ENCODE measurements at regions of chr17 and their contacts with region 1.

Region 1: DNA sequence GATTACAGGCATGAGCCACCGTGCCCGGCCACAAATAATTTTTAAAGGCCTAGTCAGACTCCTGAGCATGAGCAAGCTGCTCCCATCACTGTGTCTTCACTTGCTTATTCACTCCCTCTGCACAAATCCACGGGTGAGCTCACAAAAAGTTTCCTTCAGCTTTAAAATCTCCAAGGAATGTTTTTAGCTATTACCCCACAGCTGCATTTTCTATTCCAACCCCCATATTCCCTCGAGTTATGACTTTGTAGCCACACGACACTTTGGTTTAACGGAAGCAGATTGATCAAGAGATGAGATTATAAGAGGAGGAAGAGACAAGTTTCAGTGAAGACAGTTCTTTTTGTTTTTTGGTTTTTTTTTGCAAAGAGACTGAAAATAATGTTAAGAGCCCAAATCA is 49.1 kb upstream of the SLC25A19 start:
- DNase-seq: no peak
- H3K4me3 Mint-ChIP-seq: peak overlapping the region; percentile 66
- H3K27ac Mint-ChIP-seq: peak overlapping the region; percentile 90
- H3K4me1 Mint-ChIP-seq: peaks cover 70% of the 10 kb centered on the region
- H3K27me3 Mint-ChIP-seq: no peaks in the 10 kb centered on the region

Region 2: GRCh38 chr17:75295201-75296158 is 42.9 kb before region 1 on chr17:
- intact Hi-C with region 1: loop called (anchors 2 kb)
- DNase-seq: no peak
- H3K4me3 Mint-ChIP-seq: peak overlapping the region; percentile 66
- H3K27ac Mint-ChIP-seq: peak overlapping the region; percentile 99
- H3K4me1 Mint-ChIP-seq: peaks cover 22% of the 10 kb centered on the region
- H3K27me3 Mint-ChIP-seq: no peaks in the 10 kb centered on the region

Region 3: DNA sequence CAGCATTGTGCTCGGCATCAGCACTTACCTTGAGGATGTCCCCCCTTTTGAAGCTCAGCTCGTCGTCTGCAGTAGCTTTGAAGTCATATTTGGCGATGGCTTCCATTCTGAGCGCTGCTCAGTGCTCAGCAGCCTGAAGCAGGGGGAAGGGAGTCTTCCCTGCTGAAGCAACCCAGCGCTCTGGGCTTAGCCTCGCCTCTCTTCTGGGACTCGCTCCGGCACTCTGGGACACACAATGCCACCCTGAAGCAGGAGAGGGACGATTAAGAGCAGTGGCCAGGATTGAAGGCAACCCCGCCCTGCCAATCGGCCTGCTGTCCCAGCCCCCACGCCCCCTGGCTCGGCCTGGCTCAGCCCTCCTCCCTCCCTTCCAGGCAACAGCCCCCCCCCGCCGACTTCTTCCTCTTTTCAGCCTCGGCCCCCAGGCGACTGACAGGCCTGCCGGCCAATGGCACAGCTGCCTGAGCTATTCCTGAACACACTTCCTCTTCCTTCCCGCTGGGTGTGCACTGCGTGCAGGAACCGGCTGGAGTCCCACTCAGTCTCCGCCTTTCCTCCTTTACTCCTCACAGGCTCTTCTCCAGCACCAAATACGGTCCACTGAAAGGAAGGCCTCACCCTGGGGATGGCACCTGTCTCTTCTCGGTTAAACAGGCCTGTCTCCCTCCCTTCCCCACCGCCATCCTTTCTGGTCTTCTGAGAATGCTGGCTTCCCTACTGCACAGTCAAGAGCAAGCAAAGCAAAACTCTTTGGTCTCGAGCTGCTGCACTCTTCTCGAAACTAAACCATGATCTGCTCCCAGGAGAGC is 55.4 kb after region 1 on chr17:
- intact Hi-C with region 1: no loop called
- DNase-seq: peak; percentile 74
- H3K4me3 Mint-ChIP-seq: peak overlapping the region; percentile 90
- H3K27ac Mint-ChIP-seq: peak overlapping the region; percentile 50
- H3K4me1 Mint-ChIP-seq: peaks cover 69% of the 10 kb centered on the region
- H3K27me3 Mint-ChIP-seq: no peaks in the 10 kb centered on the region